ENCODE measurements at regions of chr1 and their contacts with region 1.

Region 1: GRCh38 chr1:44848456-44849181 is 5.6 kb upstream of the PTCH2 start:
- DNase-seq: no peak
- H3K4me3 ChIP-seq: no peak overlapping the region
- H3K27ac ChIP-seq: peak overlapping the region in 1 of 5 donors; percentile 44
- H3K4me1 ChIP-seq: peaks cover 0 to 26% of the 10 kb centered on the region in 2 donors
- H3K27me3 ChIP-seq: no peaks in the 10 kb centered on the region
- CTCF ChIP-seq: no peak
- POLR2A ChIP-seq: no peak

Region 2: DNA sequence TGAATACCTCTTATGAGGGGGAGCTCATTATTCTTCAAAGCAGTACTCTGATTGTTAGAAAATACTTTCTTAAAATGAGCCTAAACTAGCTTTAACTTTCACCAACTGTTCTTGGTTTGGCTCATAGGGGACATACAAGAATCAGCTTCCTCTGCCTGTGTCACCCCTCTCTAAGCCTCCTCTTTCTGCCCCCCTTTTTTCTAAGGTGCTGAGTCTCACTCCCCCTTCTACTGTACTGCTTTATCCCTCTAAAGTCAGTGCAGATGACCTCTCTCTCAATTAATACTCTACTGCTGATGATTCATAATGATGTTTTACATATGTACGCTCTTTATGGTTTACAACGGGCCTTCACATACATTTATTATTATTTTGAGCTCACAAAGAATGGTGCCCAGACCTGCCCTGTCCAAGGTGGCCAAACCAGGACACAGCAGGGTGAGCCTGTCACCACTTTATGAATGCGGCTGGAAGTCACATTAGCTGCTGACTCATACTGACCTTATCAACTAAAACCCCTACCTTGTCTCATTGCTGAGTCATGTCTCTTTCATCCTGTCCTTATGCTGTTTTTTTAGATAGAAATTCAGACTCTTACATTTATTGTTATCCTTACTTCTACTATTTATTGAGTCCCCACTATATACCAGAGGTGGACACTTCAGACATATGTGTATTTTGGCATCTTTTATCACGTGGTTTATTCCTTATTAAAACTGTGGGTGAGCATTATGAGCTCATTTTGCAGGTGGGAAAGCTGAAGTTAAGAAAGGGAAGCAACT is 316.6 kb before region 1 on chr1:
- intact Hi-C with region 1: no loop called
- DNase-seq: peak in 5 of 7 donors; percentile 2 to 28 (median 19)
- H3K4me3 ChIP-seq: no peak overlapping the region
- H3K27ac ChIP-seq: no peak overlapping the region
- H3K4me1 ChIP-seq: no peaks in the 10 kb centered on the region
- H3K27me3 ChIP-seq: no peaks in the 10 kb centered on the region
- CTCF ChIP-seq: no peak
- POLR2A ChIP-seq: no peak

Region 3: DNA sequence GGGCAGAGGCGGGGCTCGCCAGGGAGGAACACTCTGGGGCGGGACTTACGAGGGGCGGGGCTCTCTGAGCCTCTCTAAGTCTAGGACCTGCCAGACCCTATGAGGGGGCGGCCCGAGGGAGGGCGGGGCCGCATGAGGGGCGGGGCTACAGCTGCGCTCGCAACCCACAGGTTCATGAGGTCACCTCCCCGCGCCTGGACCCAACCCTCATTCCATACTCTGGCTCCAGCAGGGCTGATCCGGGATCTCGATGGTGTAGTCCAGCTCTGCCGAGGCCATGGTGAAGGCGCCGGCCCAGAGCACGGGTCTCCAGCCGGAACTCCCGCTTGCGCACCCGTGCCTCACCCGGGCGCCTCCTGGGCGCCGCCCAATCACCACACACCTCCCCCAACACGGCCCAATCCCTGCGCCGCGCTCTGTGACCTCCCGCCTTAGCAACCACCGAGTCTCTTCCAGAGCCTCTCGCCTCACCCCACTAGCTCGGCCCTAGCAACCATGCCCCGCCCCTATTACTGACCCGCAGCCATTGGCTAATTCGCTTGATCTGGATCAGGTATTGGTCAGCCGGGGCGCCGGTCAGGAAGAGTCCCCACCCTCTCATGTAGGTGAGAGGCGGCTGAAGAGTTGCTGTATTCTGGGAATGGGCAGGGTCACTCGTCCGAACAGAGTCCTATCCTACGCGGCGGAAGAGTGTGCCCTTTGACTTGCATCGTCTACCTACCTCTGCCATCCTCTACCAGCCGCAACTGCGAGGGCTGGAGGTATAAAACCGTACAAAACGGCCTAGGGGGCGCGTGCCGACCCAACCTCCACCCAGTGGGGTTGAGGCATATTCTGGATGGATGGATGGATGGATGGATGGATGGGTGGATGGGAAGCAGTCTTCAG is 174.3 kb before region 1 on chr1 and contains the starts of genes ARMH1 and TMEM53:
- intact Hi-C with region 1: no loop called
- DNase-seq: peak; percentile 99 to 100 (median 100)
- H3K4me3 ChIP-seq: peak within 1 kb of the TSS in 3 of 4 donors; percentile 44 to 86 (median 62)
- H3K27ac ChIP-seq: peak within 1 kb of the TSS; percentile 75 to 99 (median 87)
- H3K4me1 ChIP-seq: peaks cover 31 to 70% of the 10 kb centered on the region in 2 donors
- H3K27me3 ChIP-seq: no peaks in the 10 kb centered on the region
- CTCF ChIP-seq: no peak
- POLR2A ChIP-seq: peak in 1 of 2 donors; percentile 64
- total RNA-seq, gene ARMH1: 0.18 to 12.4 (median 3.9) TPM
- total RNA-seq, gene TMEM53: 7.2 to 47.4 (median 13.0) TPM

Region 4: GRCh38 chr1:44985747-44986359 is 137.2 kb after region 1 on chr1:
- intact Hi-C with region 1: loop called in 1 of 2 experiments (anchors 5 kb)
- DNase-seq: peak in 1 of 7 donors; percentile 8
- H3K4me3 ChIP-seq: peak overlapping the region; percentile 21 to 96 (median 82)
- H3K27ac ChIP-seq: peak overlapping the region in 3 of 5 donors; percentile 45 to 89 (median 59)
- H3K4me1 ChIP-seq: peaks cover 10 to 24% of the 10 kb centered on the region in 2 donors
- H3K27me3 ChIP-seq: no peaks in the 10 kb centered on the region
- CTCF ChIP-seq: no peak
- POLR2A ChIP-seq: no peak

Measured in adrenal gland (tissue), 19 donors.